CD8-positive, alpha-beta T cell (primary cell): ENCODE measurements at regions of chr6 and their contacts with region 1.

Region 1: GRCh38 chr6:24991810-24992467 is 56.2 kb upstream of the RIPOR2 start:
- DNase-seq: peak; percentile 48 to 90 (median 75)
- ATAC-seq: peak; percentile 92
- H3K4me3 ChIP-seq: peak overlapping the region; percentile 5 to 15
- H3K4me3 Mint-ChIP-seq: peak overlapping the region; percentile 68
- H3K27ac ChIP-seq: peak overlapping the region; percentile 14 to 55
- H3K27ac Mint-ChIP-seq: peak overlapping the region; percentile 93
- H3K4me1 ChIP-seq: peaks cover 40% of the 10 kb centered on the region
- H3K4me1 Mint-ChIP-seq: peaks cover 74% of the 10 kb centered on the region
- H3K27me3 ChIP-seq: no peaks in the 10 kb centered on the region
- H3K27me3 Mint-ChIP-seq: no peaks in the 10 kb centered on the region
- CTCF ChIP-seq: peak; percentile 83

Region 2: DNA sequence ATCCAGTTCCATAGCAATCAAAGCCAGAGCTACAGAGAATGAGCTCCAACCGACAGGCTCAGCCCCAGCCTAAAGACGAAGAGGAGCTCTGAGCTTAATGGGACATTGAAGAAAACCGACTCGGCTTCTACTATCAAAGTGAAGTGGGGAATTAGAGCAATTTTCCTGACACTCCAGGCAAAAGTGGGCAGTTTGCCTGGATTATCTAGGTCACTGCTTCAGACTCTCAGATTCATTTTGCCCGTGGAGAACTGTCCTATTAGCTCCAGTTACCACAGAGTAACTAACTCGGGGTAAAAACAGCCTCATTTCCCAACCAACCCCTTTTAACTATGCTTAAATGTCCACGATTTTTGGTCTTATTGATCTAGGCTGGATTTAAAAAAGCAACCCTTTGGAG is 1458.0 kb before region 1 on chr6:
- CTCF ChIA-PET with region 1: no interaction called
- POLR2A ChIA-PET with region 1: no interaction called
- intact Hi-C with region 1: no loop called
- DNase-seq: no peak
- ATAC-seq: no peak
- H3K4me3 ChIP-seq: no peak overlapping the region
- H3K4me3 Mint-ChIP-seq: no peak overlapping the region
- H3K27ac ChIP-seq: no peak overlapping the region
- H3K27ac Mint-ChIP-seq: no peak overlapping the region
- H3K4me1 ChIP-seq: no peaks in the 10 kb centered on the region
- H3K4me1 Mint-ChIP-seq: no peaks in the 10 kb centered on the region
- H3K27me3 ChIP-seq: no peaks in the 10 kb centered on the region
- H3K27me3 Mint-ChIP-seq: no peaks in the 10 kb centered on the region
- CTCF ChIP-seq: no peak

Region 3: DNA sequence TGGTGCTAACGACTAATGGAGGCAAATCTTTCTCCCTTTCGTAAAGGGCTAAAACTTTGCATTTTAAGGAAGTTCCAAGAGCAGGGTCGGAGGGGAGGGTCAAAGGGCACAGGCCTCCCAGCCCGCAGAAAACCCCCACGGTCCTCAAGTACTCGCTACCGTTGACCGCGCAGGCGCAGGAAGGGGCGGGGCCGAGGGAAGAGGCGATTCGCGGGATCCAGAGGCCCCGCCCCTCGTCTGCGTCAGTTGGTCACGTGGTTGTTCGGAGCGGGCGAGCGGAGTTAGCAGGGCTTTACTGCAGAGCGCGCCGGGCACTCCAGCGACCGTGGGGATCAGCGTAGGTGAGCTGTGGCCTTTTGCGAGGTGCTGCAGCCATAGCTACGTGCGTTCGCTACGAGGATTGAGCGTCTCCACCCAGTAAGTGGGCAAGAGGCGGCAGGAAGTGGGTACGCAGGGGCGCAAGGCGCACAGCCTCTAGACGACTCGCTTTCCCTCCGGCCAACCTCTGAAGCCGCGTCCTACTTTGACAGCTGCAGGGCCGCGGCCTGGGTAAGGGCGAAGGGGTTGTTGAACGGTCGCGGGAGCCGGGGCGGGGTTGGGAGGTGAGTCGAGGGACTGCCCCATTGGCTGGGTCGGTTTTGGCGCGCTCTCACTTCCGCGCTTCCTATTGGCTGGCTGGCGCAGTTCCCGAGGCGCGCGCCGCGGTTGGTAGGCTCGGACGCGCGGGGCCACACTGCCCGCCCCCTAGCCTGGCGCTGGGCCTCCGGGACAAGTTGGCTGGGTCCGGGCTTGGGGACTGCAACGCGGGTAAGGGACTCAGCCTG is 217.0 kb before region 1 on chr6 and contains the start of gene GMNN:
- CTCF ChIA-PET with region 1: no interaction called
- POLR2A ChIA-PET with region 1: no interaction called
- intact Hi-C with region 1: no loop called
- DNase-seq: peak; percentile 93 to 99 (median 98)
- ATAC-seq: peak; percentile 86
- H3K4me3 ChIP-seq: peak within 1 kb of the TSS; percentile 86 to 94
- H3K4me3 Mint-ChIP-seq: peak within 1 kb of the TSS; percentile 99
- H3K27ac ChIP-seq: peak within 1 kb of the TSS; percentile 83 to 85
- H3K27ac Mint-ChIP-seq: peak within 1 kb of the TSS; percentile 97
- H3K4me1 ChIP-seq: peaks cover 14% of the 10 kb centered on the region
- H3K4me1 Mint-ChIP-seq: peaks cover 22% of the 10 kb centered on the region
- H3K27me3 ChIP-seq: no peaks in the 10 kb centered on the region
- H3K27me3 Mint-ChIP-seq: no peaks in the 10 kb centered on the region
- CTCF ChIP-seq: no peak
- total RNA-seq, gene GMNN: 14.1 to 14.4 TPM

Region 4: DNA sequence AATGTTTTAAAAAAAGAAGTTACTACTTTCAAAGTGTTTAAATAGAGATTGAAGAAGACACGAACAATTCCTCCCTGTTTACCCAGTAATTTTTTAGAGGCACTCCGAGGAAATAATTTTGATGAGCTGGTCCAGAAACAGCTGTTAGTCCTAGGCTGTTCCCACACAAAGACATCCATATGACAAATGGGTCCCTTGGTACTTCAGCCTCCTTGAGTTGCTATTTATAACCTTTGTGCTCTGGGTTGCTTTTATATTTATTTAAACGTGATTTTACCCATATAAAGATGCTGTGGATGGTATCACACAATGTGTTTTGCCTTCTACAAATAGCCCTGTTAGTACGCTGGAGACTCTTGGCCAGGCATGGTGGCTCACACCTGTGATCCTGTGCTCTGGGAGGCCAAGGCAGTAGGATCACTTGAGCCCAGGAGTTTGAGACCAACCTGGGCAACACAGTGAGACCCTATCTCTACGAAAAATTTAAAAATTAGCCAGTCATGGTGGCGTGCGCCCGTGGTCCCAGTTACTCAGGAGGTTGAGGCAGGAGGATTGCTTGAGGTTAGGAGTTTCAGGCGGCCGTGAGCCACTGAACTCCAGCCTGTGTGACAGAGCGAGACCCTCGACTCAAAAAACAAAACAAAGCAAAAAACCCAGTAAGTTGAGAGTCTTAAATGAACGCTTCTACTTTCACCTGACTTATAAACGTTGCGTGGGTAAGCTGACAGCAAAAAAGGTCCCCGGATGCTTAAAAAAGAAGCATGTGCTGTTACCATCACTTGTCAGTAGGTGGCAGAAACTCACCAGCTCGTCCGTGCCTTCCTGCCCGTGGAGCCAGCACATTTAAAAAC is 136.3 kb before region 1 on chr6:
- CTCF ChIA-PET with region 1: interaction called, 83 read pairs
- POLR2A ChIA-PET with region 1: interaction called, 28 read pairs
- intact Hi-C with region 1: loop called (anchors 1 kb)
- DNase-seq: peak; percentile 39 to 90 (median 67)
- ATAC-seq: peak; percentile 69
- H3K4me3 ChIP-seq: no peak overlapping the region
- H3K4me3 Mint-ChIP-seq: peak overlapping the region; percentile 36
- H3K27ac ChIP-seq: peak overlapping the region in 1 of 2 experiments; percentile 52
- H3K27ac Mint-ChIP-seq: peak overlapping the region; percentile 96
- H3K4me1 ChIP-seq: peaks cover 53% of the 10 kb centered on the region
- H3K4me1 Mint-ChIP-seq: peaks cover 61% of the 10 kb centered on the region
- H3K27me3 ChIP-seq: no peaks in the 10 kb centered on the region
- H3K27me3 Mint-ChIP-seq: no peaks in the 10 kb centered on the region
- CTCF ChIP-seq: peak; percentile 77

Region 5: GRCh38 chr6:24888715-24889370 is 103.1 kb before region 1 on chr6:
- CTCF ChIA-PET with region 1: interaction called, 23 read pairs
- POLR2A ChIA-PET with region 1: interaction called, 4 read pairs
- intact Hi-C with region 1: no loop called
- DNase-seq: no peak
- ATAC-seq: peak; percentile 62
- H3K4me3 ChIP-seq: no peak overlapping the region
- H3K4me3 Mint-ChIP-seq: peak overlapping the region; percentile 30
- H3K27ac ChIP-seq: peak overlapping the region in 1 of 2 experiments; percentile 48
- H3K27ac Mint-ChIP-seq: peak overlapping the region; percentile 79
- H3K4me1 ChIP-seq: peaks cover 84% of the 10 kb centered on the region
- H3K4me1 Mint-ChIP-seq: peaks cover 88% of the 10 kb centered on the region
- H3K27me3 ChIP-seq: no peaks in the 10 kb centered on the region
- H3K27me3 Mint-ChIP-seq: no peaks in the 10 kb centered on the region
- CTCF ChIP-seq: no peak

Region 6: GRCh38 chr6:24927985-24928745 is 63.8 kb before region 1 on chr6:
- CTCF ChIA-PET with region 1: interaction called, 320 read pairs
- POLR2A ChIA-PET with region 1: interaction called, 136 read pairs
- intact Hi-C with region 1: no loop called
- DNase-seq: peak in 1 of 9 experiments; percentile 51
- ATAC-seq: no peak
- H3K4me3 ChIP-seq: peak overlapping the region; percentile 38 to 89
- H3K4me3 Mint-ChIP-seq: peak overlapping the region; percentile 97
- H3K27ac ChIP-seq: peak overlapping the region; percentile 50 to 73
- H3K27ac Mint-ChIP-seq: peak overlapping the region; percentile 95
- H3K4me1 ChIP-seq: peaks cover 73% of the 10 kb centered on the region
- H3K4me1 Mint-ChIP-seq: peaks cover 82% of the 10 kb centered on the region
- H3K27me3 ChIP-seq: no peaks in the 10 kb centered on the region
- H3K27me3 Mint-ChIP-seq: no peaks in the 10 kb centered on the region
- CTCF ChIP-seq: no peak

Region 7: DNA sequence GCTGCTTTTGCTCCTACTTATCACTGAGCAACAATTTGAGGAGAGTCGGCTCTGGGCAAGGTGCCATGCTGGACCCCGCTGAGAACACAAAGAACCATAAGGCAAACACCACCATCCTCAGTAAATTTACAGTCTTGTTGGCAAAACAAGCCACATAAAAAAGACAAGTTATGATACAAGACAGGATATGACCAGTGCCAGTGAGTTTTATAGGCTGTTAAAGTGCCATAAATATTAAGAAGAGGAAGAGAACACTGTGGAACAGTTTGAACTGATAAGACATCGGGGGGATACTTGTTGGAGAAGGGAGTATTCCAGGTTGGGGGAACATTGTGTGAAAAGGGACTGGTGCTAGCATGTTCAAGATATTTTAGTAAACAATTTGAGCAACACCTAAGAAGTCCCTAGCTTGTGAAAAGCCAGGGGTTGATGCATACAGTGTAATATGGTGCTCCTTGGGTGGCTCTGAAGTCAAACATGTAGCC is 30.9 kb before region 1 on chr6:
- CTCF ChIA-PET with region 1: interaction called, 35 read pairs
- POLR2A ChIA-PET with region 1: interaction called, 10 read pairs
- intact Hi-C with region 1: no loop called
- DNase-seq: peak in 3 of 9 experiments; percentile 26 to 71 (median 41)
- ATAC-seq: peak; percentile 69
- H3K4me3 ChIP-seq: peak overlapping the region in 1 of 2 experiments; percentile 6
- H3K4me3 Mint-ChIP-seq: peak overlapping the region; percentile 54
- H3K27ac ChIP-seq: peak overlapping the region; percentile 5 to 71
- H3K27ac Mint-ChIP-seq: peak overlapping the region; percentile 92
- H3K4me1 ChIP-seq: peaks cover 82% of the 10 kb centered on the region
- H3K4me1 Mint-ChIP-seq: peaks cover 84% of the 10 kb centered on the region
- H3K27me3 ChIP-seq: no peaks in the 10 kb centered on the region
- H3K27me3 Mint-ChIP-seq: no peaks in the 10 kb centered on the region
- CTCF ChIP-seq: no peak

Region 8: DNA sequence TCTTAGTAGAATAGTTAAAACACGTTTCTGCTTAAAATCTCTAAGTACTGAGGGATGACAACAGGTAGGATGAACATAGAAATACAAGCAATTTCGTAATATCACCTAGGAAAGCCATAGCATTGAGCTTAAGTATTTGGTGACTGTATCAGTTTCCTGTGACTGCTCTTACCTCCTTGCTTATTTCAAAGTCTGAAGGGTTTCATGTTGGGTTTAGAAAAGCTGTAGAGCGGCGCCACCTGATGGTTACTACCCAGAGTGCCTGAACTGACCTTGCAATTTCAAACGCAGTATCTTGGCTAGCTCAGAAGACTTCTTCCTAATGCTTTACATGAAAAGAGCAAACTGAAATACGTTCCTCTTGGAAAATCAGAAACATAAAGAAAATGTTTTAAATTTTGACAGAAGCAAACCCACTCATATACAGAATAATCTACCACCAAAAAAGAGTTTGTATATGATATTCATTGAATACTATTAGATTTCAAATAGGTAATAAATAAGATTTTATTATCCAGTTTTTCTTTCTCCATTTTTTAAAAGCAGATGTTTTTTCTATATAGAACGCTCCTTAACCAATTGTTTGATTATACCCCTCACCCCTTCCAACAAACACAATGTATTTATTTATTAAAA is 26.1 kb after region 1 on chr6:
- CTCF ChIA-PET with region 1: interaction called, 28 read pairs
- POLR2A ChIA-PET with region 1: interaction called, 8 read pairs
- intact Hi-C with region 1: loop called (anchors 1 to 2 kb)
- DNase-seq: peak; percentile 65 to 90 (median 84)
- ATAC-seq: peak; percentile 87
- H3K4me3 ChIP-seq: no peak overlapping the region
- H3K4me3 Mint-ChIP-seq: no peak overlapping the region
- H3K27ac ChIP-seq: peak overlapping the region in 1 of 2 experiments; percentile 59
- H3K27ac Mint-ChIP-seq: peak overlapping the region; percentile 87
- H3K4me1 ChIP-seq: peaks cover 31% of the 10 kb centered on the region
- H3K4me1 Mint-ChIP-seq: peaks cover 38% of the 10 kb centered on the region
- H3K27me3 ChIP-seq: no peaks in the 10 kb centered on the region
- H3K27me3 Mint-ChIP-seq: no peaks in the 10 kb centered on the region
- CTCF ChIP-seq: peak; percentile 89